ENCODE measurements at regions of chr10 and their contacts with region 1.

Region 1: GRCh38 chr10:52644373-52645186 is 128.0 kb downstream of the MBL2 start:
- DNase-seq: no peak
- ATAC-seq: peak; percentile 73

Region 2: GRCh38 chr10:52729271-52730104 is 84.9 kb after region 1 on chr10:
- intact Hi-C with region 1: loop called (anchors 5 kb)
- DNase-seq: no peak
- ATAC-seq: peak; percentile 42